ENCODE measurements at regions of chr4 and their contacts with region 1.

Region 1: GRCh38 chr4:118974758-118975157 is 86.1 kb downstream of the SYNPO2 start:
- DNase-seq: no peak
- H3K4me3 ChIP-seq: no peak overlapping the region
- H3K27ac ChIP-seq: peak overlapping the region in 3 of 5 donors; percentile 5 to 60 (median 25)
- H3K4me1 ChIP-seq: peaks cover 0 to 36% (median 15%) of the 10 kb centered on the region in 4 donors
- H3K27me3 ChIP-seq: no peaks in the 10 kb centered on the region
- CTCF ChIP-seq: no peak
- EP300 ChIP-seq: no peak
- POLR2A ChIP-seq: no peak

Region 2: DNA sequence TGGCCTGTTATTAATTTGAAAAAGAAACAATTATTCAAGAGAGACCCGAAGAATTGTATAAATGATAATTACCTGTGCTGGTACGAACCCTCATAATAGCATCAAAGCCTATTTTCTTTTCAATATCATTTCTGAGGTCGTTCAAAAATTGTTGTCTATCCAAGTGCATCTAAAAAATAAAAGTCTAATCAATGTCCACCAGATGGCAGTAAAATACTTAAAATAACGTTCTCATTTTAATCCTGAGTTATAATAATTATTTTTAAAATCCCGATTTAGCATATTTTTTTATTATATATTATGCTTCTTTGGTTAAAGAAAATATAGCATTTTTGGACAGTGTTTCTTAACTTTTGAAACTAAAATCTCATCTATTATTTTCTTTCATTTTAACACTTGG is 233.9 kb before region 1 on chr4:
- intact Hi-C with region 1: loop called (anchors 10 kb)
- DNase-seq: peak in 1 of 2 donors; percentile 30
- H3K4me3 ChIP-seq: peak overlapping the region in 1 of 4 donors; percentile 4
- H3K27ac ChIP-seq: peak overlapping the region in 3 of 5 donors; percentile 24 to 64 (median 48)
- H3K4me1 ChIP-seq: peaks cover 0 to 33% (median 16%) of the 10 kb centered on the region in 4 donors
- H3K27me3 ChIP-seq: no peaks in the 10 kb centered on the region
- CTCF ChIP-seq: peak in 3 of 7 experiments; percentile 35 to 46 (median 46)
- EP300 ChIP-seq: no peak
- POLR2A ChIP-seq: no peak

Region 3: GRCh38 chr4:119070301-119070700 is 95.5 kb after region 1 on chr4:
- intact Hi-C with region 1: no loop called
- DNase-seq: no peak
- H3K4me3 ChIP-seq: no peak overlapping the region
- H3K27ac ChIP-seq: no peak overlapping the region
- H3K4me1 ChIP-seq: peaks cover 0 to 8% (median 0%) of the 10 kb centered on the region in 4 donors
- H3K27me3 ChIP-seq: no peaks in the 10 kb centered on the region
- CTCF ChIP-seq: no peak
- EP300 ChIP-seq: no peak
- POLR2A ChIP-seq: no peak

Measured in stomach (tissue), 19 donors.